ENCODE measurements at regions of chr11 and their contacts with region 1.

Region 1: DNA sequence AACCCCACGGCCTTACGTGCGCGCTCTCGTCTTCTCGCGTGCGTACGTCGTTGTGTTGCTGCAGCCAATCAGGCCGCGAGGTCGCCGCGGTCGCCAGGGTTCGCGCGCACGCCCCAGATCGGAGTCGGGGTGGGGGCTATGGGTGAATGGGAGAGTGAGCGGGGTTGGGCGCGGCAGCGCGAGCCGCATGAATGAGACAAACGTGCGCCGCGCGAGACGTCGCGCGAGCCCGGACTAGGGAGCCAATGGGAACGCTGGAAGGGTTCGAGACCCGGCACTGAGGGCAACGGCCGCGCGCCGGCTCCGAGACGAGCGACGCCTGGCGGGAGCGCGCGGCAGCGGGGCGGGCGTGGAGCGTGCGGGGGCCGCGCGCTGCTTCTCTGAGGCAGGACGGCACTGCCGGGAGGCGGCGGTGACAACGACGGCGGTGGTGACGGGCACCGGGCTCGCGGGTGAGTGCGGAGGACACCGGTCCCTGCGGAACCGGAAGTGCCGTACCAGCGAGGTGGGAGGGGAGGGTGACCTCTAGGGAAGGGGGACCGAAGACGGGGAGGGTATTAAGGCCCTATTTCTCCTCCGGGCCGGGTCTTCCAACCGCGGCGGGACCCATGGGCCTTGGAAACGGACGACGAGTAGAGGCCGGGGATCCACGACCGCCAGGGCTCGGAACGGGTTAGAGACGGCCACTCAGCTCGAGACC is at the start of gene ZDHHC5:
- DNase-seq: peak; percentile 100
- H3K4me3 Mint-ChIP-seq: peak within 1 kb of the TSS; percentile 99
- H3K27ac Mint-ChIP-seq: peak within 1 kb of the TSS; percentile 99
- H3K4me1 Mint-ChIP-seq: peaks cover 51% of the 10 kb centered on the region
- H3K27me3 Mint-ChIP-seq: no peaks in the 10 kb centered on the region
- total RNA-seq, gene ZDHHC5: 77.6 to 86.6 TPM

Region 2: GRCh38 chr11:57638005-57638781 is 29.7 kb before region 1 on chr11:
- CTCF ChIA-PET with region 1: no interaction called
- POLR2A ChIA-PET with region 1: no interaction called
- DNase-seq: no peak
- H3K4me3 Mint-ChIP-seq: peak overlapping the region; percentile 80
- H3K27ac Mint-ChIP-seq: no peak overlapping the region
- H3K4me1 Mint-ChIP-seq: peaks cover 14% of the 10 kb centered on the region
- H3K27me3 Mint-ChIP-seq: peaks cover 36% of the 10 kb centered on the region

Region 3: GRCh38 chr11:57657194-57658022 is 10.5 kb before region 1 on chr11 and contains the start of gene CLP1:
- CTCF ChIA-PET with region 1: interaction called, 6 read pairs
- POLR2A ChIA-PET with region 1: interaction called, 14 read pairs
- DNase-seq: peak; percentile 99
- H3K4me3 Mint-ChIP-seq: peak within 1 kb of the TSS; percentile 93
- H3K27ac Mint-ChIP-seq: peak within 1 kb of the TSS; percentile 91
- H3K4me1 Mint-ChIP-seq: peaks cover 39% of the 10 kb centered on the region
- H3K27me3 Mint-ChIP-seq: no peaks in the 10 kb centered on the region
- total RNA-seq, gene CLP1: 14.8 to 17.5 TPM

Region 4: DNA sequence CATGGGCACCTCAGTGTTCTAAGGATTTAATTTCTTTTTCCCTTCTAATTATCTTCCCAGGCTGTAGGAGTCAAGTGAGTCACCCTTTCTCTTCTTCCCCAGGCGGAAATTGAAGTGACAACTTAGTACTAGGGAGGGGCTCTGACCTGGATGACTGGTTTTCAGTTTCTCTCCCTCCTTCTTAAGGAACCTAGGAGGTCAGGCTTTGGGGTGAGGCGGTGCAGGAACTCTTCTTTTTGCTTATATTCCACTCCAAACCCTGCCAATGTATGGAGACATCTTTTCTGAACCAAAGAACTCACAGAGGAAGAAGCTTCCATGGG is 12.6 kb after region 1 on chr11:
- CTCF ChIA-PET with region 1: no interaction called
- POLR2A ChIA-PET with region 1: interaction called, 12 read pairs
- DNase-seq: no peak
- H3K4me3 Mint-ChIP-seq: no peak overlapping the region
- H3K27ac Mint-ChIP-seq: peak overlapping the region; percentile 76
- H3K4me1 Mint-ChIP-seq: peaks cover 46% of the 10 kb centered on the region
- H3K27me3 Mint-ChIP-seq: no peaks in the 10 kb centered on the region

Region 5: DNA sequence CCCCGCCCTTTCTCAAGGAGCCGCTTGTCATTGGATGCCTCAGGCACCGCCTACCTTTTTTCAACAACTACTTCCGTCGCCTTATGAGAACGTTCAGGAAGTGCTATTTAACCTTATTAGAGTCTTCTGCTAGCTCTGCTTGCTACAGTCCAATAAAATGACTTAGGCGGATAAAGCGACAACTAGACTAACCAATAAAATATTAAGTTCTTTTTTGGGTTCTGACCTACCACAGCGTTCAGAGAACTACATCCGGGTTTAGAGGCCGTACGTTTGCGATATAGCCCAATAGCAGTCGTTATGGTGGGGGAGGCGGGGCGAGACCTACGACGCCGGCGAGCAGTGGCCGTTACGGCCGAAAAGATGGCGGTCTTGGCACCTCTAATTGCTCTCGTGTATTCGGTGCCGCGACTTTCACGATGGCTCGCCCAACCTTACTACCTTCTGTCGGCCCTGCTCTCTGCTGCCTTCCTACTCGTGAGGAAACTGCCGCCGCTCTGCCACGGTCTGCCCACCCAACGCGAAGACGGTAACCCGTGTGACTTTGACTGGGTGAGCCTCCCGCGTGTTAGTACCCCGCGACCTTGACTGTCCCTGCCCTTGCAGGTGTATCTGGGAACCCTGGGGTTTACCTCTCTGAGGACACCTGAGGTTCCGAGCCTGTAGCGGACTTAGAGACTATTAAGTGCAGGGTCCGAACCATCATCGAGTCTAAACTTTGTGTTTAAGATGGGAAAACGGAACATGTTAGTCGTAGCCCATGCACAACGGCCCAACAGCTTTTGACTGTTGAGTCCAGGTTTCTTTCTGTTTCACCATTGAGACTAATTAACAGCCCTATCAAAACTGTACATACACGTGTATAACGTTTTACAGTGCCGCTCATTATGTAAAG is 44.6 kb after region 1 on chr11 and contains the start of gene TMX2:
- CTCF ChIA-PET with region 1: no interaction called
- POLR2A ChIA-PET with region 1: interaction called, 10 read pairs
- DNase-seq: peak; percentile 93
- H3K4me3 Mint-ChIP-seq: peak within 1 kb of the TSS; percentile 98
- H3K27ac Mint-ChIP-seq: peak within 1 kb of the TSS; percentile 90
- H3K4me1 Mint-ChIP-seq: peaks cover 58% of the 10 kb centered on the region
- H3K27me3 Mint-ChIP-seq: no peaks in the 10 kb centered on the region
- total RNA-seq, gene TMX2: 47.0 to 53.6 TPM

Region 6: GRCh38 chr11:57815476-57815875 is 147.6 kb after region 1 on chr11:
- CTCF ChIA-PET with region 1: no interaction called
- POLR2A ChIA-PET with region 1: no interaction called
- DNase-seq: no peak
- H3K4me3 Mint-ChIP-seq: no peak overlapping the region
- H3K27ac Mint-ChIP-seq: no peak overlapping the region
- H3K4me1 Mint-ChIP-seq: peaks cover 12% of the 10 kb centered on the region
- H3K27me3 Mint-ChIP-seq: no peaks in the 10 kb centered on the region

Measured in activated CD4-positive, alpha-beta memory T cell treated with anti-CD3 and anti-CD28 coated beads, Interleukin-2, amount 10 ng/mL, durations not matched to agents 7 days and 5 days (primary cell).